Naive thymus-derived CD4-positive, alpha-beta T cell (primary cell): ENCODE measurements at regions of chr15 and their contacts with region 1.

Region 1: GRCh38 chr15:49421991-49422390 is 1.1 kb upstream of the FGF7 start:
- DNase-seq: peak in 8 of 9 donors; percentile 5 to 60 (median 52)
- ATAC-seq: peak; percentile 75
- H3K4me3 ChIP-seq: no peak overlapping the region
- H3K4me3 Mint-ChIP-seq: peak overlapping the region in 8 of 10 donors; percentile 23 to 72 (median 49)
- H3K27ac ChIP-seq: no peak overlapping the region
- H3K27ac Mint-ChIP-seq: peak overlapping the region in 7 of 9 donors; percentile 10 to 84 (median 74)
- H3K4me1 ChIP-seq: no peaks in the 10 kb centered on the region
- H3K4me1 Mint-ChIP-seq: peaks cover 3 to 6% (median 4%) of the 10 kb centered on the region in 7 donors
- H3K27me3 ChIP-seq: no peaks in the 10 kb centered on the region
- H3K27me3 Mint-ChIP-seq: peaks cover 0 to 9% (median 0%) of the 10 kb centered on the region in 5 donors

Region 2: DNA sequence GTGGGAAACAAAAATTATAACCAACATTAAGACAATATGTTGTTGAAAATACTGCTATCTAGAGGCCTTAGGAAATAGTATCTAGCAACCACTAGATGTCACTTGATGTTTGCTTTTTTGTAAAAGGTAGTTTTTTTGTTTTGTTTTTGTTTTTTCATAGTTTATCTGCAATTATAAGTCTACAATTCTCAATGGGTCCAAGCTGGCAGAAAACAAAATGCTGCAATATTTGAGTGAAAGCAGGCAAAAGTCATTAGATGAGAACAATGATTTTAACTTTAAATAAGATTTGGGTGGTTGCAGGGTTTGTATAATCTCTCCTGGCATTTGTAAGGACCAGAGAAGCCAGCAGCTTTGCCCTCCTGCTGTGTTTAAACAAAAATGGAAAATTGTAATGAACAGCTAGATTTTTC is 1063.8 kb before region 1 on chr15:
- CTCF ChIA-PET with region 1: interaction called, 3 read pairs
- POLR2A ChIA-PET with region 1: no interaction called
- intact Hi-C with region 1: loop called in 1 of 2 experiments (anchors 2 kb)
- DNase-seq: no peak
- ATAC-seq: no peak
- H3K4me3 ChIP-seq: no peak overlapping the region
- H3K4me3 Mint-ChIP-seq: no peak overlapping the region
- H3K27ac ChIP-seq: no peak overlapping the region
- H3K27ac Mint-ChIP-seq: no peak overlapping the region
- H3K4me1 ChIP-seq: no peaks in the 10 kb centered on the region
- H3K4me1 Mint-ChIP-seq: peaks cover 0 to 11% (median 8%) of the 10 kb centered on the region in 7 donors
- H3K27me3 ChIP-seq: no peaks in the 10 kb centered on the region
- H3K27me3 Mint-ChIP-seq: no peaks in the 10 kb centered on the region

Region 3: GRCh38 chr15:49145651-49146609 is 276.1 kb before region 1 on chr15:
- CTCF ChIA-PET with region 1: interaction called, 3 read pairs
- POLR2A ChIA-PET with region 1: no interaction called
- intact Hi-C with region 1: loop called in 1 of 2 experiments (anchors 1 kb)
- DNase-seq: peak in 6 of 9 donors; percentile 18 to 49 (median 28)
- ATAC-seq: peak; percentile 76
- H3K4me3 ChIP-seq: no peak overlapping the region
- H3K4me3 Mint-ChIP-seq: peak overlapping the region in 1 of 10 donors; percentile 44
- H3K27ac ChIP-seq: no peak overlapping the region
- H3K27ac Mint-ChIP-seq: peak overlapping the region in 4 of 9 donors; percentile 1 to 63 (median 42)
- H3K4me1 ChIP-seq: peaks cover 8 to 14% of the 10 kb centered on the region in 2 donors
- H3K4me1 Mint-ChIP-seq: peaks cover 22 to 74% (median 50%) of the 10 kb centered on the region in 7 donors
- H3K27me3 ChIP-seq: no peaks in the 10 kb centered on the region
- H3K27me3 Mint-ChIP-seq: no peaks in the 10 kb centered on the region

Region 4: DNA sequence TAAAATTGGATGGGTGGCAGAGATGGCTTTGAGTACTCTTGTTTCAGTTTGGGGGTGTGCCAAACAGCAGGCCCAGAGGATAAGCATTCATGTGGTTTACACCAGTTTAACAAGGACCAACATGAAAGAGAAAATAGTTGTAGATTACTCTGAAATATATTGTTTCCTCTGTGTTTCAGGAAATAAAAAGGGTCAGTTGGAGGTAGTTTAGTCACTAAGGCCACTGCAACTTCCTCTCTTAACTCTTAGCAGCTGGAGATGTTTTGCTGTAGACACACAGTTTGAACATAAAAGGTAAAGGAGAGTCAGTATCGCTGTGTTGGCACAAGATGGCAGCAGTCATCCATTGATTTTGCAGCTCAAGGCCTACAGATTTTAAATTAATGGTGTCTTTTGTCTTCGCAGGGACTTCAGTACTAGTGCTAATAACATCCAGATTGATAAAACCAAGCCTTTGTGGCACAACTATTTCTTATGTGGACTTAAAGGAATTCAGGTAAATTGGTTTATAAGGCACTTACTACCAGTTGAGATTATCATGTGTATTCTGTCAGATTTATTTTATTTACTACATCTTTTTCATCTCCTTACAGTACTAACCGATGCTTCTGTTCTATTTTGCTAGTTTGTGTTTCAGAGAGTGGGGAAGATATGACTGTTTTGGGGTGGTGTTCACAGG is 186.4 kb before region 1 on chr15:
- CTCF ChIA-PET with region 1: interaction called, 14 read pairs
- POLR2A ChIA-PET with region 1: no interaction called
- intact Hi-C with region 1: loop called (anchors 1 kb)
- DNase-seq: peak in 7 of 9 donors; percentile 13 to 51 (median 44)
- ATAC-seq: peak; percentile 87
- H3K4me3 ChIP-seq: no peak overlapping the region
- H3K4me3 Mint-ChIP-seq: no peak overlapping the region
- H3K27ac ChIP-seq: no peak overlapping the region
- H3K27ac Mint-ChIP-seq: peak overlapping the region in 4 of 9 donors; percentile 6 to 67 (median 41)
- H3K4me1 ChIP-seq: no peaks in the 10 kb centered on the region
- H3K4me1 Mint-ChIP-seq: peaks cover 0 to 24% (median 13%) of the 10 kb centered on the region in 7 donors
- H3K27me3 ChIP-seq: no peaks in the 10 kb centered on the region
- H3K27me3 Mint-ChIP-seq: no peaks in the 10 kb centered on the region

Region 5: GRCh38 chr15:49589030-49589429 is 167.0 kb after region 1 on chr15:
- CTCF ChIA-PET with region 1: no interaction called
- POLR2A ChIA-PET with region 1: no interaction called
- intact Hi-C with region 1: no loop called
- DNase-seq: no peak
- ATAC-seq: no peak
- H3K4me3 ChIP-seq: no peak overlapping the region
- H3K4me3 Mint-ChIP-seq: peak overlapping the region in 1 of 10 donors; percentile 33
- H3K27ac ChIP-seq: no peak overlapping the region
- H3K27ac Mint-ChIP-seq: peak overlapping the region in 3 of 9 donors; percentile 33 to 81 (median 54)
- H3K4me1 ChIP-seq: no peaks in the 10 kb centered on the region
- H3K4me1 Mint-ChIP-seq: peaks cover 0 to 17% (median 5%) of the 10 kb centered on the region in 7 donors
- H3K27me3 ChIP-seq: no peaks in the 10 kb centered on the region
- H3K27me3 Mint-ChIP-seq: no peaks in the 10 kb centered on the region

Region 6: GRCh38 chr15:50315814-50316630 is 894.0 kb after region 1 on chr15:
- CTCF ChIA-PET with region 1: no interaction called
- POLR2A ChIA-PET with region 1: no interaction called
- intact Hi-C with region 1: loop called in 1 of 2 experiments (anchors 5 kb)
- DNase-seq: peak in 7 of 9 donors; percentile 8 to 47 (median 30)
- ATAC-seq: peak; percentile 66
- H3K4me3 ChIP-seq: no peak overlapping the region
- H3K4me3 Mint-ChIP-seq: no peak overlapping the region
- H3K27ac ChIP-seq: no peak overlapping the region
- H3K27ac Mint-ChIP-seq: no peak overlapping the region
- H3K4me1 ChIP-seq: peaks cover 0 to 6% of the 10 kb centered on the region in 2 donors
- H3K4me1 Mint-ChIP-seq: peaks cover 12 to 34% (median 21%) of the 10 kb centered on the region in 7 donors
- H3K27me3 ChIP-seq: no peaks in the 10 kb centered on the region
- H3K27me3 Mint-ChIP-seq: no peaks in the 10 kb centered on the region